Cardiac septum (tissue), 1 donor: ENCODE measurements at regions of chr13 and their contacts with region 1.

Region 1: GRCh38 chr13:23180711-23181110 is at the start of gene SGCG:
- DNase-seq: no peak
- total RNA-seq, gene SGCG: 81.7 TPM

Region 2: DNA sequence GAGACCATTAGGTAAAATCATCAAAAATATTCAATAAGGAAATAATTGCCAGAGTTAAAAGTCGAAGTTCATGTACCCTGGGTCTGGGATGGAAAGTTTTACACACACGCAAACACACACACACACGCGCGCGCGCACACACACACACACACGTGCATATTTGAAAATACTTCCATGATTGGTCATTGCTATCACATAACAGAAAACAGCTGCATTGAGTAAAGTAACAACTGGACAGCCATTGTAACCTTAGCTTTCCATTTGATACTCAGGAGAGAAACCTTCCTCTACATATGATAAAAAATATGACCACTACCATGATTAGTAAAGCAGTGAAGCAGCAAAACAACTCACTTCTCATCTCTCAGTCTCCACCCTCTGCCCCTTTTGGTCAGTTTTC is 490.0 kb before region 1 on chr13:
- intact Hi-C with region 1: no loop called
- DNase-seq: no peak

Region 3: GRCh38 chr13:23375001-23375971 is 194.6 kb after region 1 on chr13:
- intact Hi-C with region 1: loop called (anchors 10 kb)
- DNase-seq: peak; percentile 99

Region 4: DNA sequence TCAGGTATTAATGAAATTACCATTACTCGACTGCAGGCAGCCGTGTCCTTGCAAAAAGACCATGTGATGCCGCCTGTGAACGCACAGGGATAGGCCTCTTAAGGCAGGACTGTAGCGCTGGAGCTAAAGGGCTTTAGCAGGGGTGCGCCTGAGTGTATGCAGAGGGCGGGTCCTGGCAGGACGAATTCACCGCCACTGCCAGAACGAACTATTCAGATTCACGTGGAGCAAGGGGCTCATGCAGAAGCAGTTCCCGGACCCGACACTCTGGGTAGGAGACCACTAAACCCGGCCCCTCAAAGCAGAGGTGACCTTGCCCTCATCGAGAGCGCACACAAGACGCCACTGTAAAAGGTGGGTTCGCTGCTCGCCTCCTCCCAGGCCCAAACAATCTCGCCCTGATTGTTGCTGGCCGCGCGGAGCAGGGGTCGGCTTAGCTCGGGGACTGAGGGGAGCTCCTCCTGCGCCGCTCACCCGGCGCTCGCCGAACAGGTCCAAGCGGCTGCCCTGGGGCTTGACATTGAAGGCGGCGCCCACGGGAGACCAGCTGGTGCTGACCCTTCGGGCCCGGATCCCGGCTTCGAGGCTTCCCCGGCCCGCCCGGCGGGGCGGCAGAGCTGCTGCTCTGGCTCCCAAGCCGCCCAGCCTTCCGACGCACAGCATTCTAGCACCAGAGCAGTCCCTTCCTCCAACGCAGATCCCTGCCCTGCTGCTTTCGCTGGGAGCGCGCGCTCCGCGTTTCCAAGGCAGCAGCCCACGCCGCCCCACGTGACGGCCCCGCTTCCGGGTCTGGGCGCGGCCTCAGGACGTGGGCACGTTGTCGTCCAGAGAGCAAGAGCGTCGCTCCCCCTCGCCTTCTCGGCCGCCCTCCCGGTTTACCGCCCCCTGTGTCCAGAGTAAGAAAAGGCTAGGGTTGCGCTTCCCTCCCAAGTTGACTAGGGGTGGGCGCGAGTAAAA is 708.2 kb after region 1 on chr13 and contains the start of gene MIPEP:
- intact Hi-C with region 1: no loop called
- DNase-seq: peak; percentile 95
- total RNA-seq, gene MIPEP: 30.4 TPM